A549 (cell line): ENCODE measurements at regions of chrX and their contacts with region 1.

Region 1: GRCh38 chrX:119228512-119229252 is 7.4 kb upstream of the PGRMC1 start:
- DNase-seq: peak in 1 of 2 experiments; percentile 56
- ATAC-seq: peak; percentile 30 to 66; a peak in 3 of 6 replicates
- H3K4me3 ChIP-seq: no peak overlapping the region
- H3K27ac ChIP-seq: no peak overlapping the region
- H3K4me1 ChIP-seq: peaks cover 15% of the 10 kb centered on the region
- CTCF ChIP-seq: no peak
- EP300 ChIP-seq: no peak
- POLR2A ChIP-seq: no peak
- RAD21 ChIP-seq: no peak

Region 2: DNA sequence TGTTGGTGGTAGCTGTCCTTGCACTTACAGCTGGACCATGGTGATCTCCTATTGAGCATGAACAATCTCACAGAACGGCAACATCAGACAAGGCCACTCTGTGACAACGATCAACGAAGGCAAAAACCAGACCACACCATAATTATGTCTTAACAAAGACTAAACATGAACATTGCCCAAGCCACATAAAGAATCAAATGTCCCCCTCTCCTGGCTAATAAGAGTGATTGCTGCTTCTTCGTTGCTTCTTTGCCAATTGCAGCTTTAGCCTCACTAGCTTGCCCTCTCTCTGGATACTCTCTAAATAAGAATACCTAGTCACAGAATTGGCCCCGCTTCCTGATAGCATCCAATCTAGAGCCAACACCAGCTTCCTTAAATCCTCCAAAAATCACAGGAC is 34.1 kb before region 1 on chrX:
- CTCF ChIA-PET with region 1: no interaction called
- POLR2A ChIA-PET with region 1: no interaction called
- DNase-seq: peak in 1 of 2 experiments; percentile 30
- ATAC-seq: peak in 1 of 2 experiments; percentile 51; a peak in 1 of 6 replicates
- H3K4me3 ChIP-seq: no peak overlapping the region
- H3K27ac ChIP-seq: no peak overlapping the region
- H3K4me1 ChIP-seq: no peaks in the 10 kb centered on the region
- CTCF ChIP-seq: peak; percentile 30
- EP300 ChIP-seq: no peak
- POLR2A ChIP-seq: no peak
- RAD21 ChIP-seq: peak; percentile 20 to 40; a peak in 3 of 5 replicates

Region 3: DNA sequence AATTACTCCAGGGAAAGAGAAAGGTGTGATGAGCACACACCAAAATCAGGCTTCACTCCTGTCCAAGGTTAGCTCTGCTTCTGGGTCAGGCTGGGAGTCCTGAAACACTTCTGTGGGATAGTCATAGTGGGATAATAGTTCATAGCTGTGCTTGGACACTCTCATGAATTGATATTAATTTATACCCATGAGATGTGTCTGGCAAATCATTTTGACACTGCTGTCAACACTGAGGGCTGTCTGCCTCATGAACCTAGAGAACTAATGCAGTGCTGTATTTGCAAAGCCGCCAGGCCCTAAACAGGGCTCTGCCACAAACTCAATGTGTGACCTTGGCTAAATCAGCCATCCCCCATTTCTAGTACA is 17.1 kb before region 1 on chrX:
- CTCF ChIA-PET with region 1: interaction called, 17 read pairs
- POLR2A ChIA-PET with region 1: no interaction called
- DNase-seq: no peak
- ATAC-seq: no peak
- H3K4me3 ChIP-seq: no peak overlapping the region
- H3K27ac ChIP-seq: no peak overlapping the region
- H3K4me1 ChIP-seq: no peaks in the 10 kb centered on the region
- CTCF ChIP-seq: no peak
- EP300 ChIP-seq: no peak
- POLR2A ChIP-seq: no peak
- RAD21 ChIP-seq: no peak